Common myeloid progenitor, CD34-positive (primary cell): ENCODE measurements at regions of chr3 and their contacts with region 1.

Region 1: DNA sequence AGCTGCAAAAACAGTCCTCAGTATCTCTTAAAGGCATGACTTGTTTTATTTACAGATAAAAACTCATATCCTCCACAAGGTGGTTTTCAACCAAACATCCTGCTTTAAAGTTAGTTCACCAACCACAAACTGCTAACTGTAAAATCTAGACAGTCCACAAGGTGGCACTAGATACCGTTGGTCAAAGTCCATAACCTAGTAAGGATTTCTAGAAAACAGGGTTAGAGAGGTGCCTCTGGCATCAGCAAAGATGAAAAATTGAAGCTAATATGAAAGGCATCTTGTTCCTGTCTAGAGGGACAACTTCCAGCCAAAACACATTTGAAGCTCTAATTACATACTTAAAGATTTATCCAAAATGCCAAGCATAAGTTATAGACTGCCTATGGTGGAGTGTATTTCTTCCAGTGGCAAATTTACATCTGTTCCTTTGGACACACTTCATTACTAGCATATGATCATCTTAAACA is 56.0 kb downstream of the ZMAT3 start:
- DNase-seq: peak; percentile 87 to 95 (median 92)
- H3K4me3 ChIP-seq: no peak overlapping the region
- H3K27ac ChIP-seq: no peak overlapping the region
- H3K4me1 ChIP-seq: peaks cover 0 to 13% (median 2%) of the 10 kb centered on the region in 4 experiments
- H3K27me3 ChIP-seq: no peaks in the 10 kb centered on the region

Region 2: GRCh38 chr3:178536211-178537079 is 479.1 kb before region 1 on chr3 and contains the start of gene KCNMB2:
- CTCF ChIA-PET with region 1: no interaction called
- POLR2A ChIA-PET with region 1: no interaction called
- DNase-seq: peak; percentile 2 to 35 (median 25)
- H3K4me3 ChIP-seq: peak within 1 kb of the TSS in 6 of 7 experiments; percentile 6 to 72 (median 48)
- H3K27ac ChIP-seq: no peak within 1 kb of the TSS
- H3K4me1 ChIP-seq: peaks cover 0 to 3% (median 0%) of the 10 kb centered on the region in 4 experiments
- H3K27me3 ChIP-seq: peaks cover 0 to 15% (median 3%) of the 10 kb centered on the region in 5 experiments

Region 3: GRCh38 chr3:178703268-178703975 is 312.2 kb before region 1 on chr3:
- CTCF ChIA-PET with region 1: no interaction called
- POLR2A ChIA-PET with region 1: no interaction called
- DNase-seq: no peak
- H3K4me3 ChIP-seq: no peak overlapping the region
- H3K27ac ChIP-seq: no peak overlapping the region
- H3K4me1 ChIP-seq: no peaks in the 10 kb centered on the region
- H3K27me3 ChIP-seq: no peaks in the 10 kb centered on the region

Region 4: DNA sequence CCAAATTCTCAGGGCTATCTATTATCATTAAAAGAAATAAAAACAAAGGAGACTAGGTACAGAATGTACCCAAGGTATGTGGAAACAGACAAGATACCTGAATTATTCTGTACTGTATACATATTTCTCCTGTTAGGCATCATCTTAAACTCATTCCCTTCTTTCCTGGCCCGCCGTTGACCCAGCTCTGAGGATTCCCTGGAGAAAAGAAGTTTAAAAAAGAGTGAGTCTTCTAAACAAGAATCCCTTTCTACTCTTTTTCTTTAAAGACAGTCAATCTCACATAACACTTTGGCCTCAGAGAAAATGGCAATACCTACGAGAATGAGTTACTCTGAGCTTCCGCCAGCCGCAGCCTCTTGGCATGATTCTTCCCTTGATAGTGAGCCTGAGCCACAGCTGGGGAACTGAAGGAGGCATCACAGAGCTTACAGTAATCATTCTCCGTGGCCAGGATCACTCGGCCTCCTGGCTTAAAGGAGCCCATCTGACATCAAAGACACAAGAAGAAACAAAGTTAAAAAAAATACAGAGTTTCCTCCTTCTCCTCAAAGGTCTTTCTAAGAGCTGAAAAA is 11.8 kb after region 1 on chr3:
- CTCF ChIA-PET with region 1: interaction called, 16 read pairs
- POLR2A ChIA-PET with region 1: no interaction called
- DNase-seq: peak in 2 of 3 donors; percentile 63 to 66
- H3K4me3 ChIP-seq: no peak overlapping the region
- H3K27ac ChIP-seq: peak overlapping the region in 1 of 2 experiments; percentile 10
- H3K4me1 ChIP-seq: peaks cover 0 to 9% (median 4%) of the 10 kb centered on the region in 4 experiments
- H3K27me3 ChIP-seq: no peaks in the 10 kb centered on the region

Region 5: GRCh38 chr3:179083977-179084376 is 68.4 kb after region 1 on chr3:
- CTCF ChIA-PET with region 1: interaction called, 13 read pairs
- POLR2A ChIA-PET with region 1: no interaction called
- DNase-seq: no peak
- H3K4me3 ChIP-seq: no peak overlapping the region
- H3K27ac ChIP-seq: no peak overlapping the region
- H3K4me1 ChIP-seq: no peaks in the 10 kb centered on the region
- H3K27me3 ChIP-seq: no peaks in the 10 kb centered on the region

Region 6: GRCh38 chr3:179292450-179292849 is 276.9 kb after region 1 on chr3:
- CTCF ChIA-PET with region 1: no interaction called
- POLR2A ChIA-PET with region 1: no interaction called
- DNase-seq: no peak
- H3K4me3 ChIP-seq: no peak overlapping the region
- H3K27ac ChIP-seq: no peak overlapping the region
- H3K4me1 ChIP-seq: no peaks in the 10 kb centered on the region
- H3K27me3 ChIP-seq: no peaks in the 10 kb centered on the region

Region 7: DNA sequence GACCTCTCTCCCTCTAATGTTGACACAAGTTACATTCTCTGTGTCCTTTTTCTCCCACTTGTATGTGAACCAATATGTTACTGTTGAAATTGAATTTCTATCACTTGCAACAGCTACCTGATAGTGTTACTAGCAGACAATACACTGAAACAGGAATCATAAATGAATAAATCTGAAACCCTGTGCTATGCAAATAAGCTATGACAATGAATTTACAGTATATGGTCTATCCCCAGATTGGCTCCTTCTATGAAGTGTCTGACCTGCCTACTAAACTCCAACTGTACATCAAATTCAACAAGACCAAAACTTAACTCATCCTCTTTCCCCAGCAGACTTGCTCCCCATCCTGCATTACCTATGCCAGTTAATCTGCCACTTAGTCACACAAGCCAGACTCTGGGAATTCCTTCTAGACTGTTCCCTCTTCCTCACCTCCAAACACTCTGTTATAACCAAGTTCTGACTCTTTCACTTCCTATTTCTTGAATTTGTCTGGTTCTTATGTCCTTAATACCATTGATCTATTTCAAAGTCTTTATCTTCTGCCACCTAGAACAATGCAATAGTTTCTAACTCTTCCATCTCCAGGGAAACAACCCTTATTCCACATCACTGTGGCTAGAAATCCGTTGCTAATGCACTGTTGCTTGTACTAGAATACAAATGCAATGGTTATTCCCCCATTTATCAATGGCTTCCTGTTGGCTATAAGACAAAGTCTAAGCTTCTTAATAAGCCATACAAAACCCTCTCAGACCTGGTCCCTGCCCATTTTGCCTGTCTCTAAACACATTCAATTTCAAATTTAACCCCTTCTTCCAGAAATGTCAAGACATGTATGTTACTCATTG is 293.9 kb after region 1 on chr3:
- CTCF ChIA-PET with region 1: interaction called, 17 read pairs
- POLR2A ChIA-PET with region 1: no interaction called
- DNase-seq: no peak
- H3K4me3 ChIP-seq: no peak overlapping the region
- H3K27ac ChIP-seq: no peak overlapping the region
- H3K4me1 ChIP-seq: no peaks in the 10 kb centered on the region
- H3K27me3 ChIP-seq: no peaks in the 10 kb centered on the region

Region 8: DNA sequence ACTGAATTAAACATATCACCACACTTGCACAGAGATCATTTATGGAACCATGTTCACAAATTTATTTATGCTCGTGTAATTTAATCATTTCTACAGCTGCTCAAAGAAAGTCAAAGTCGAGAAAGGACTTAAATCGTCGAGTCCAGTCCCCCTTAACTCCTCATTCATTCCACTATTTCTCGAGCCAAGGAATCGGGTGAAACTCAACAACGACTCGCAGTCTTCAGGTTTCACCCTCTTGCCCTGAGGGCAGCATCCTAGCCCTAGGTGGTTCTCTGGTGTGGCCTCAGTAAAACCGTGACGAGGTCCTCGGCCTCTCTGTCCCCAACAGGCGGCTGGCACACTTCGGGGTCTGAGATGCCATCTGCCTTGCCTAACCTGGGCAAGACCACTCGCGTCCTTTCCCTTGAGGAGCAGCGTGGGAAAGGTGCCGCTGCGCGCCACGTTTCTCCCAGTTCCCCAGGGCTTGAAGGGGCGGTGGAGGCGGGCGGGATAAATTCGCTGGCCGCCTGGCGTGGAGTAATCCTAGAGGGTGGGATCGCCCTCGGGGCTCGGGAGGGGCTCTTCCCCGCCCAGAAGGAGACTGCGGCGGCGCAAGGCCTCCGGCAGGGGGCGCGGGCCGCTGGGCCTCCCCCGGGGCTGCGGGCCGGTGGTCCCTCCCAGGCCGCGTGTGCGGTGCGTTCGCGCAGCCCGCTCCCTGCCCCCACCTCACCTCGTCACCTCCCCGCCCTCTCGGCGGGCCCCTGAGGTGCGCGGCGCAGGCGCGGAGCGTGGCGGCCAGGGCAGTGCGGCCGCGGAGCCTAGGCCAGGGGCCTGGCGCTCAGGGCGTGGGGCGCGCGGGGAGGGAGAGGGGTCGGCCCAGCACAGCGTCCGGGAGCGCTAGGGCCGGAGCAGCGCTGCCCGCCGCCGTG is 307.0 kb after region 1 on chr3 and contains the start of gene ZNF639:
- CTCF ChIA-PET with region 1: interaction called, 28 read pairs
- POLR2A ChIA-PET with region 1: no interaction called
- DNase-seq: peak; percentile 91 to 96 (median 96)
- H3K4me3 ChIP-seq: peak within 1 kb of the TSS; percentile 79 to 93 (median 86)
- H3K27ac ChIP-seq: peak within 1 kb of the TSS; percentile 88 to 94
- H3K4me1 ChIP-seq: peaks cover 14 to 28% (median 22%) of the 10 kb centered on the region in 4 experiments
- H3K27me3 ChIP-seq: no peaks in the 10 kb centered on the region

Region 9: DNA sequence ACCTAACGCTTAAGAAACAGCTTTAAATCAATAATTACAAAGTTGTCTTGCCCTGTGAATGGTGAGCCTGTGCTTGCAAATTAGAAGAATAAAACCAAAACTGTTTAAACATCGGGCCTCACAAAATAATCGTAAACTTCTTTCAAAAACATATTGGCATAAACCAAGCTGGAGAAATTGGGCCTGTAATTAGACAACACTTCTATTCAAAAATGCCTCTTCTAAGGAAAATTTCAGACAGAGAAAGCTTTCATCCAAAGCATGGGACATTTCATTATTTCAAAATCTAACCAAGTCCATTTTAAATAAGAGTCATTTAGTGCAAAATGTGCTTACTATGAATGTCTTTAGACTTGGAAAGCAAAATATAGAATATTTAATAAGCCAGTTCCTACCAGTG is 471.2 kb after region 1 on chr3:
- CTCF ChIA-PET with region 1: no interaction called
- POLR2A ChIA-PET with region 1: no interaction called
- DNase-seq: no peak
- H3K4me3 ChIP-seq: no peak overlapping the region
- H3K27ac ChIP-seq: no peak overlapping the region
- H3K4me1 ChIP-seq: no peaks in the 10 kb centered on the region
- H3K27me3 ChIP-seq: no peaks in the 10 kb centered on the region